Natural killer cell (primary cell): ENCODE measurements at regions of chr5 and their contacts with region 1.

Region 1: GRCh38 chr5:142984011-142984410 is 213.8 kb downstream of the ARHGAP26 start:
- DNase-seq: no peak
- ATAC-seq: peak; percentile 8 to 21 (median 20)
- H3K4me3 ChIP-seq: no peak overlapping the region
- H3K4me3 Mint-ChIP-seq: peak overlapping the region; percentile 18
- H3K27ac ChIP-seq: peak overlapping the region; percentile 62
- H3K27ac Mint-ChIP-seq: peak overlapping the region; percentile 83 to 89
- H3K4me1 ChIP-seq: peaks cover 51% of the 10 kb centered on the region
- H3K4me1 Mint-ChIP-seq: peaks cover 77 to 80% of the 10 kb centered on the region in 2 donors
- H3K27me3 ChIP-seq: no peaks in the 10 kb centered on the region
- H3K27me3 Mint-ChIP-seq: no peaks in the 10 kb centered on the region
- CTCF ChIP-seq: no peak

Region 2: DNA sequence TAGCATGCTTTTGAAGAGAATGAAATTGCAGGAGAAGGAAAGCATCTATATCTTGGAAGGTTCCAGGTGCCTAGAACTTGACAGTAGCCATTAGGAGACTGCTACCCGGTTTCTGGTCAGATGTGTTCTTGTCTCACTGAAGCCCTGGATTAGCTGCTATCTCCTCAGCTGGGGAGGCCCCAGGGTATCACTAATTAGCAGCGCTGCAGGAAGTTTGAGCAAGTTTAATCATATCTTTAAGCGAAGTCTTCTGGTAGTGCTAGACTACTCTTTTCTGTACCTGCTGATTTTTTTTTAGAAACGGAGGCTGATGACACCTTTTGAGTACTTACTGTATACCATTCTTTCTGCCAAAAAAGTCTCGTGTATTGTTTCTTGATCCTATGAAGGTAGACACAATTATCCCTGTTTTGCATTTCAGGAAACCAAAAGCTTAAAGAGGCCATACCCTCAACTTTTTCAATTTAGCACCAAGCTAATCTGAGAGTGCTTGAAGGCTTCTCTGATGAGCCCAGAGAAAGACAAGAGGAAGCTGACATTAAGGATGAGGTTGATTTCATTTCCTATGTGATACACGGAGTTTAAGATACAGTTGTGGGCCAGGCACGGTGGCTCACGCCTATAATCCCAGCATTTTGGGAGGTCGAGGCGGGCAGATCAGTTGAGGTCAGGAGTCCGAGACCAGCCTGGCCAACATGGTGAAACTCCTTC is 12.6 kb before region 1 on chr5:
- intact Hi-C with region 1: loop called (anchors 2 kb)
- DNase-seq: peak in 1 of 2 donors; percentile 34
- ATAC-seq: peak; percentile 46 to 67 (median 57)
- H3K4me3 ChIP-seq: no peak overlapping the region
- H3K4me3 Mint-ChIP-seq: peak overlapping the region; percentile 57
- H3K27ac ChIP-seq: peak overlapping the region; percentile 73
- H3K27ac Mint-ChIP-seq: peak overlapping the region; percentile 89 to 91
- H3K4me1 ChIP-seq: peaks cover 61% of the 10 kb centered on the region
- H3K4me1 Mint-ChIP-seq: peaks cover 91% of the 10 kb centered on the region in 2 donors
- H3K27me3 ChIP-seq: no peaks in the 10 kb centered on the region
- H3K27me3 Mint-ChIP-seq: no peaks in the 10 kb centered on the region
- CTCF ChIP-seq: no peak

Region 3: DNA sequence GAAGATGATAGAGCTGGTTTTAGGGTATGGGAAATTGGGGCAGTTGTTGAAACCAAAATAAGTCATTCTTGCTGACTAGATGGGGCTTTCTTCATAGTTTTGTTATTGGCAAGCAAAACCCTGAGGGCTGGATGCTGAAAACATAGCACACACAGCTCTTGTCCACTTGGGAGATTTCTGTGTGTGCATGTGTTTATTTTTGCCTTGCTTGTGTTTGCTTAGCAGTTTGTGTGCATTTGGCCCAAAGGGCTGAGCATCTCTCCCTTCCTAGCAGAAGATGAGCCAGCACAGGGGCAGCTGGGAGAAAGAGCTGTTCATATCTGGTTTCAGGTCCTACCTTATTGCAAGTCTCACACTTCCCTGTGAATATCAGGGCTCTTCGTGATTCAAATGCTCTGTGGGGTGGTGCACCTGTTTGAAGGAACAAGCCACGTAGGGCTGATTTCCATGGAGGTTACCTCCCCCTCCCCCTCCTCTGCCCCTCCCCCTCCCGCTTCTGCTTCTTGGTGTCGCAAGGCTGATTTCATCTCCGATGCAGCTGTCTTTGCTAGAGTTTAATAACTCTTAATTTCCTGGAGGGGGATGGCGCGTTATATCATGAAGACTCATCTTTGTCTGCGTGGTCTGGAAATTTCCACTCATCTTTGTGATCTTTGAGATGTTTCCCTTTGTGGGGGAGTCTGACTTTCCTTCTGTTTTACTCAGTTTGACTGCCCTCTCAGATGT is 82.7 kb after region 1 on chr5:
- intact Hi-C with region 1: no loop called
- DNase-seq: no peak
- ATAC-seq: no peak
- H3K4me3 ChIP-seq: no peak overlapping the region
- H3K4me3 Mint-ChIP-seq: no peak overlapping the region
- H3K27ac ChIP-seq: no peak overlapping the region
- H3K27ac Mint-ChIP-seq: peak overlapping the region; percentile 24 to 44
- H3K4me1 ChIP-seq: no peaks in the 10 kb centered on the region
- H3K4me1 Mint-ChIP-seq: peaks cover 22 to 40% of the 10 kb centered on the region in 2 donors
- H3K27me3 ChIP-seq: no peaks in the 10 kb centered on the region
- H3K27me3 Mint-ChIP-seq: no peaks in the 10 kb centered on the region
- CTCF ChIP-seq: no peak